Activated CD8-positive, alpha-beta T cell treated with anti-CD3 and anti-CD28 coated beads for 36 hours (primary cell): ENCODE measurements at regions of chr12 and their contacts with region 1.

Region 1: GRCh38 chr12:64551698-64552097 is 58.6 kb upstream of the RASSF3 start:
- DNase-seq: no peak
- ATAC-seq: no peak
- H3K4me3 Mint-ChIP-seq: no peak overlapping the region
- H3K27ac Mint-ChIP-seq: no peak overlapping the region
- H3K4me1 Mint-ChIP-seq: peaks cover 3% of the 10 kb centered on the region
- H3K27me3 Mint-ChIP-seq: no peaks in the 10 kb centered on the region
- CTCF ChIP-seq: no peak

Region 2: DNA sequence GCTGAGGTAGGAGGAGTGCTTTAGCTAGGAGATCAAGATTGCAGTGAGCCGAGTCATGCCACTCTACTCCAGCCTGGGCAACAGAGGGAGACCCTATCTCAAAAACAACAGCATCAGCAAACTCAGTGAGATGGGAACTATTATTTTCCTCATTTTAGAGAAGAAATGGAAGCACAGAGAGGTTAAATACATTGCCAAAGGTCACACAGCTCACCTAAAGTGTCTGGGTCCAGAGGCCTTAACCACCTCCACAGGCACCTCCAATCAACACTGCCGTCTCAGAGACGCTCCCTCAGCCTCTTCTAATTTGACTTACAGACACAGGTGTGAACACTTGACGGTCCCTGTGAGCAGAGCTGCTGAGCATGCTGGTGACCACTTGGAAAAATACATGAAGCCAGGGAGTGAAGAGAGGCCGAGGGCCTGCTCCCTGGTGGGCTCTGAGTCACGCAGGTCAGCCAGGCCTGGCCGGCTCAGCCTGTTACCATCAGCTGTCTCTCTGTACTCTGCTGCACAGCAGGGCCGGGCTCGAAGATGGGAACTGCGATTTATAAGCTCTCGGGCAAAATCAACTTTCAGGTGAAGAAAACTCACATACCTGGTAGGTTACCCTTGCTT is 18.9 kb before region 1 on chr12:
- CTCF ChIA-PET with region 1: interaction called, 18 read pairs
- POLR2A ChIA-PET with region 1: interaction called, 3 read pairs
- intact Hi-C with region 1: no loop called
- DNase-seq: no peak
- ATAC-seq: no peak
- H3K4me3 Mint-ChIP-seq: no peak overlapping the region
- H3K27ac Mint-ChIP-seq: no peak overlapping the region
- H3K4me1 Mint-ChIP-seq: no peaks in the 10 kb centered on the region
- H3K27me3 Mint-ChIP-seq: no peaks in the 10 kb centered on the region
- CTCF ChIP-seq: no peak

Region 3: GRCh38 chr12:64582114-64582513 is 30.4 kb after region 1 on chr12:
- CTCF ChIA-PET with region 1: interaction called, 12 read pairs
- POLR2A ChIA-PET with region 1: no interaction called
- intact Hi-C with region 1: no loop called
- DNase-seq: no peak
- ATAC-seq: no peak
- H3K4me3 Mint-ChIP-seq: no peak overlapping the region
- H3K27ac Mint-ChIP-seq: no peak overlapping the region
- H3K4me1 Mint-ChIP-seq: peaks cover 20% of the 10 kb centered on the region
- H3K27me3 Mint-ChIP-seq: no peaks in the 10 kb centered on the region
- CTCF ChIP-seq: no peak

Region 4: DNA sequence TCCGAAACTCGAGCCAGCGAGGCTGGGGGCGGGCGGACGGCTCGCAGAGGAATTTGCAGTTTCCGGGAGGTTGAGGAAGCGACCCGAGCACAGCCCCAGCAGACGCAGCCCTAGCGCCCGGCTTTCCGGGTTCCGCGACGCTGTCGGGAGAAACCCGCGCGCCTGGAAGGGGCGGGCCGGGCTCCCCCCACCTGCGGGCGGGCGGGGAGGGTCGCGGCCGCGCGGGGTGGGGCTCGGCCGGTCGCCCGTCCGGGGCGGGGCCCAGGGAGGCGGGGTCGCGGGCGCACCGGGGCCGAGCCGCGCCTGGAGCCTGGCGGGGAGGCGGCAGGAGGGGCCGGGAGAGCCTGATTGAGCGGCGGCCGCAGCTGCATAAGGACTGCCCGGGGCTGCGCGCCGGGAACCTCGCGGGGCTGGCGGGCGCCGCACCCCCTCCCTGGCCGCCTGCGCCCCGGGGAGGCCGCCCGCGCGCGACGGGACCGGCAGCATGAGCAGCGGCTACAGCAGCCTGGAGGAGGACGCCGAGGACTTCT is 58.5 kb after region 1 on chr12 and contains the start of gene RASSF3:
- CTCF ChIA-PET with region 1: interaction called, 20 read pairs
- POLR2A ChIA-PET with region 1: no interaction called
- intact Hi-C with region 1: no loop called
- DNase-seq: peak; percentile 77
- ATAC-seq: peak; percentile 65
- H3K4me3 Mint-ChIP-seq: peak within 1 kb of the TSS; percentile 96
- H3K27ac Mint-ChIP-seq: peak within 1 kb of the TSS; percentile 96
- H3K4me1 Mint-ChIP-seq: peaks cover 34% of the 10 kb centered on the region
- H3K27me3 Mint-ChIP-seq: no peaks in the 10 kb centered on the region
- CTCF ChIP-seq: no peak
- total RNA-seq, gene RASSF3: 40.4 to 41.6 TPM

Region 5: GRCh38 chr12:64696080-64696741 is 144.5 kb after region 1 on chr12:
- CTCF ChIA-PET with region 1: interaction called, 141 read pairs
- POLR2A ChIA-PET with region 1: interaction called, 3 read pairs
- intact Hi-C with region 1: loop called (anchors 1 kb)
- DNase-seq: no peak
- ATAC-seq: no peak
- H3K4me3 Mint-ChIP-seq: no peak overlapping the region
- H3K27ac Mint-ChIP-seq: peak overlapping the region; percentile 50
- H3K4me1 Mint-ChIP-seq: peaks cover 80% of the 10 kb centered on the region
- H3K27me3 Mint-ChIP-seq: no peaks in the 10 kb centered on the region
- CTCF ChIP-seq: no peak

Region 6: DNA sequence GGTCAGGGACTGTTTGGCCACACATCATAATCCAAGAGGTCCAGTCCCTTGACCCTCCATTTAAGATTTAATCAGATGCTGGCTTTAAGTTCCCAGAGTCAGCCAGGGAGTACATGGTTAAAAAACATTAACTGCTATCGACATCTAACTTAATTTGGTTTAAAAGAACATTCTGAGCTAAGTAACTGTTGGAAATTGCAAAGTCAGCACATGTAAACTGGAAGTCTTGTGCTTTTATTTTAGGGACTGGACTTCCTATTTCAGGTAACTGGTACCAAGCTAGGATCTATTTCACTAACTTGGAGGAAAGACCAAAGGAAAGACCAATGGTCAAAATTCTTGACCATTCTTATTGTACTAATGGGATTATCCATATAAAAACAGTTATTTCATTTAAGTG is 167.0 kb after region 1 on chr12:
- CTCF ChIA-PET with region 1: interaction called, 11 read pairs
- POLR2A ChIA-PET with region 1: no interaction called
- intact Hi-C with region 1: no loop called
- DNase-seq: no peak
- ATAC-seq: no peak
- H3K4me3 Mint-ChIP-seq: no peak overlapping the region
- H3K27ac Mint-ChIP-seq: no peak overlapping the region
- H3K4me1 Mint-ChIP-seq: peaks cover 20% of the 10 kb centered on the region
- H3K27me3 Mint-ChIP-seq: no peaks in the 10 kb centered on the region
- CTCF ChIP-seq: no peak